Aorta (tissue), 5 donors: ENCODE measurements at regions of chr7 and their contacts with region 1.

Region 1: GRCh38 chr7:52669027-52669426 is 366.4 kb upstream of the POM121L12 start:
- DNase-seq: peak in 1 of 2 donors; percentile 68
- ATAC-seq: no peak
- H3K4me3 ChIP-seq: no peak overlapping the region
- H3K27ac ChIP-seq: no peak overlapping the region
- H3K4me1 ChIP-seq: no peaks in the 10 kb centered on the region
- H3K27me3 ChIP-seq: no peaks in the 10 kb centered on the region

Region 2: GRCh38 chr7:52586704-52587103 is 82.3 kb before region 1 on chr7:
- intact Hi-C with region 1: no loop called
- DNase-seq: no peak
- ATAC-seq: no peak
- H3K4me3 ChIP-seq: no peak overlapping the region
- H3K27ac ChIP-seq: no peak overlapping the region
- H3K4me1 ChIP-seq: no peaks in the 10 kb centered on the region
- H3K27me3 ChIP-seq: no peaks in the 10 kb centered on the region

Region 3: DNA sequence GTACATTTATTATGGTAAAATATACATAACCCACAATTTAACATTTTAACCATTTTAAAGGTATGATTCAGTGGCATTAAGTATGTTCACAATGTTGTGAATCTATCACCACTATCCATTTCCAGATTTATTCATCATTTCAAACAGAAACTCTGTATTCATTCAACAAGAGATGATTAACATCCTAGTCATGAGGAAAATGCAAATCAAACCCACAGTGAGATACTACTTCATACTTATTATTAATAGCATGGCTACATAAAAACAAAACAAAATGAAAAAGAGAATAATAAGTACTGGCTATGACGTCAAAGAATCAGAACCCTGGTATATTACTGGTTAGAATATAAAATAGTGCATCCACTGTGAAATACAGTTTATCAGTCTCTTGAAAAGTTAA is 20.2 kb before region 1 on chr7:
- intact Hi-C with region 1: loop called in 1 of 2 experiments (anchors 2 kb)
- DNase-seq: no peak
- ATAC-seq: no peak
- H3K4me3 ChIP-seq: no peak overlapping the region
- H3K27ac ChIP-seq: no peak overlapping the region
- H3K4me1 ChIP-seq: no peaks in the 10 kb centered on the region
- H3K27me3 ChIP-seq: no peaks in the 10 kb centered on the region